CD14-positive monocyte (primary cell): ENCODE measurements at regions of chr2 and their contacts with region 1.

Region 1: GRCh38 chr2:26068602-26069298 is 34.9 kb downstream of the RAB10 start:
- DNase-seq: peak; percentile 59 to 81 (median 80)
- H3K4me3 ChIP-seq: peak overlapping the region in 1 of 3 experiments; percentile 46
- H3K4me3 Mint-ChIP-seq: peak overlapping the region in 1 of 2 donors; percentile 11
- H3K27ac ChIP-seq: peak overlapping the region in 1 of 2 donors; percentile 68
- H3K27ac Mint-ChIP-seq: peak overlapping the region; percentile 78 to 92 (median 86)
- H3K4me1 ChIP-seq: peaks cover 61 to 79% of the 10 kb centered on the region in 2 donors
- H3K4me1 Mint-ChIP-seq: peaks cover 67% of the 10 kb centered on the region
- H3K27me3 ChIP-seq: no peaks in the 10 kb centered on the region
- H3K27me3 Mint-ChIP-seq: no peaks in the 10 kb centered on the region
- CTCF ChIP-seq: no peak

Region 2: GRCh38 chr2:26001743-26002351 is 66.9 kb before region 1 on chr2:
- intact Hi-C with region 1: loop called in 1 of 2 experiments (anchors 5 kb)
- DNase-seq: peak in 2 of 3 donors; percentile 56 to 60
- H3K4me3 ChIP-seq: peak overlapping the region in 1 of 3 experiments; percentile 60
- H3K4me3 Mint-ChIP-seq: peak overlapping the region in 1 of 2 donors; percentile 67
- H3K27ac ChIP-seq: peak overlapping the region; percentile 96 to 99
- H3K27ac Mint-ChIP-seq: peak overlapping the region; percentile 99 to 100 (median 100)
- H3K4me1 ChIP-seq: peaks cover 68 to 92% of the 10 kb centered on the region in 2 donors
- H3K4me1 Mint-ChIP-seq: peaks cover 74% of the 10 kb centered on the region
- H3K27me3 ChIP-seq: no peaks in the 10 kb centered on the region
- H3K27me3 Mint-ChIP-seq: peaks cover 0 to 4% (median 4%) of the 10 kb centered on the region in 3 donors
- CTCF ChIP-seq: no peak

Region 3: DNA sequence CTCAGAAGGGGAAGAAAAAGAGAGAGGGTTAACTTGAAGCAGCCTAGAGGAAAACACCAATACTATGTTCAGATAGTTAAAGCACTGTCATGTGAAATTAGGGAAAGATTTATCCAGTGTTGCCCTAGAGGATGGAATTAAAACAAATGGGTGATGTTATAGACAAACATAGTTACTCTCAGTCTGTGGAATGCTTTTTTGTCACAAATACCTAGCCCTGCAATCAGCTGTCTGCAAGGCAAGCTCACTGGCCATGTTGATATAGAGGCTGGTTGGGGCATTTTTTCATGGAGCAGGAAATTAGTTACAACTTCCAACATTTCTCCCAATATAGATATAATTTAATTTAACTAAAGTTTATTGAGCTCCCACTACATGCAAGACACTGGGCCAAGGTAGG is 43.2 kb before region 1 on chr2:
- intact Hi-C with region 1: no loop called
- DNase-seq: no peak
- H3K4me3 ChIP-seq: no peak overlapping the region
- H3K4me3 Mint-ChIP-seq: no peak overlapping the region
- H3K27ac ChIP-seq: no peak overlapping the region
- H3K27ac Mint-ChIP-seq: no peak overlapping the region
- H3K4me1 ChIP-seq: peaks cover 5 to 12% of the 10 kb centered on the region in 2 donors
- H3K4me1 Mint-ChIP-seq: peaks cover 10% of the 10 kb centered on the region
- H3K27me3 ChIP-seq: no peaks in the 10 kb centered on the region
- H3K27me3 Mint-ChIP-seq: peaks cover 3 to 10% (median 4%) of the 10 kb centered on the region in 3 donors
- CTCF ChIP-seq: no peak

Region 4: DNA sequence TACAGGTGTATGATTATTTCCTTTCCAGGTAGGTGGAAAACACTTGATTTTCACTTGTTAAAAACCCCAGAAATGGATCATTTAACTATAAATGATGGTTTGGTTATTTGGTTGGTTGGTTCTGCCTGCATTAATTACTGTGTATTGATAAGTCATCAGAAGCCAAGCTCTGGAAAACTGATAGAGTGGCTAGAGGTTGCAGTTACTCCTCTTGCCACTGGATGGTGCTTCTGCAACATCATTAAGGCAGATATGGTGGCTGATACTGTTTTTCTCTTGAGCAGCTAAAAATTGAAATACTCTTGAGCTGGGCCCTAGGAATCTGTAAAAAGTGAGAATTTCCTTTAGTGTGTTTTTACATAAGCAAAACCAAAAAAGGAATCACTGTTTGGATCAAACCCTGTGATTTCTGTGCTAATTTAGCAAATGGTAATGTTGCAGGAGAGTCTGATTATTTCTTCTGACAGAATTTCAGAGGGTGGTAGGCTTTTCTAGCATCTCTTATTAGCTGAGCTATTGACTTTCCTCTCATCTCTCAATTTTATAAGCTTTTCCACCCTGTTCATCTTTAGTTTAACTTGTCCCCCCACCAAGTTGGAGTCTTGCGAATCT is 19.4 kb after region 1 on chr2:
- intact Hi-C with region 1: no loop called
- DNase-seq: peak in 2 of 3 donors; percentile 13 to 21
- H3K4me3 ChIP-seq: no peak overlapping the region
- H3K4me3 Mint-ChIP-seq: no peak overlapping the region
- H3K27ac ChIP-seq: no peak overlapping the region
- H3K27ac Mint-ChIP-seq: peak overlapping the region in 1 of 7 donors; percentile 69
- H3K4me1 ChIP-seq: peaks cover 28 to 35% of the 10 kb centered on the region in 2 donors
- H3K4me1 Mint-ChIP-seq: peaks cover 61% of the 10 kb centered on the region
- H3K27me3 ChIP-seq: no peaks in the 10 kb centered on the region
- H3K27me3 Mint-ChIP-seq: peaks cover 0 to 2% (median 0%) of the 10 kb centered on the region in 3 donors
- CTCF ChIP-seq: peak; percentile 86